Uterus (tissue), 4 donors: ENCODE measurements at regions of chr10 and their contacts with region 1.

Region 1: DNA sequence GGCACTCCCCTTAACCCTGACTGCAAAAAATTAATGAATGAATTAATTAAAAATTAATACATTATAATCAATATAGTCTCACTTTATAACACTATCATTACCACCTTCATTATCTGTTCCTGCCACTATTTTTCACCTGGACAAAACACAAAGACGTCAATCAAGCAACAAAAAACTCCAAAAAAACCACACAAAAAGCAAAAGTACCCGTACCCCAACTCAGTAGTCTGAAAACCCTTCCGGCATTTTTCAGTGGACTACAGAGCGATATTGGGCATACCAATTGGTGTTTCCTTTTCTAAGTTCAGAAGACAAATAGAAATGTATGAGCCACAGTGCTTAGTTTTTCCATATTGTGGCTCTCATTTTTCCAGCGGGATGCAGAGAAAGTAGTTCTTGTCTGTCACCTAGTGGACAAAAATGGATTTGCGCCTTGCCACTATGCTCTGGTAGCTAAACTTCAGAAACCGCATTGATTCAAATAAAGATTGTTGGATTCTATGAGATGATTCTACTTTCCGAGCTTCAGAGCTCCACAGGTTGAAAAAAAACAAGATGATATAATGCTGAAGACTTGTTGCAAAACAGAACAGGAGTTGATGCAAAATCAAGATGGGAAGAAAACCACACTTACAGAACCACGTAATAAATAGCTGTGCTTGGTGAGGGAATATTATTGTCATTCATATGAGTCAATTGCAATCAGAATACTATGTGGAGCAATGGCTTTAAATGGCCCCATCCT is 50.6 kb upstream of the ITGB1 start:
- DNase-seq: peak; percentile 36 to 75
- H3K4me3 ChIP-seq: no peak overlapping the region
- H3K27ac ChIP-seq: no peak overlapping the region
- H3K4me1 ChIP-seq: no peaks in the 10 kb centered on the region
- H3K27me3 ChIP-seq: no peaks in the 10 kb centered on the region
- CTCF ChIP-seq: peak; percentile 97 to 98 (median 98)
- POLR2A ChIP-seq: no peak

Region 2: GRCh38 chr10:32795598-32796183 is 213.0 kb before region 1 on chr10:
- intact Hi-C with region 1: loop called (anchors 2 kb)
- DNase-seq: no peak
- H3K4me3 ChIP-seq: no peak overlapping the region
- H3K27ac ChIP-seq: no peak overlapping the region
- H3K4me1 ChIP-seq: no peaks in the 10 kb centered on the region
- H3K27me3 ChIP-seq: no peaks in the 10 kb centered on the region
- CTCF ChIP-seq: peak; percentile 68 to 80 (median 75)
- POLR2A ChIP-seq: no peak